Breast epithelium (tissue), 4 donors: ENCODE measurements at regions of chr13 and their contacts with region 1.

Region 1: GRCh38 chr13:90483906-90484305 is 863.6 kb upstream of the MIR17HG start:
- DNase-seq: no peak
- H3K4me3 ChIP-seq: no peak overlapping the region
- H3K27ac ChIP-seq: no peak overlapping the region
- H3K4me1 ChIP-seq: no peaks in the 10 kb centered on the region
- H3K27me3 ChIP-seq: no peaks in the 10 kb centered on the region
- CTCF ChIP-seq: no peak
- POLR2A ChIP-seq: no peak

Region 2: GRCh38 chr13:90039516-90039915 is 444.4 kb before region 1 on chr13:
- intact Hi-C with region 1: no loop called
- DNase-seq: no peak
- H3K4me3 ChIP-seq: no peak overlapping the region
- H3K27ac ChIP-seq: no peak overlapping the region
- H3K4me1 ChIP-seq: no peaks in the 10 kb centered on the region
- H3K27me3 ChIP-seq: no peaks in the 10 kb centered on the region
- CTCF ChIP-seq: no peak
- POLR2A ChIP-seq: no peak

Region 3: DNA sequence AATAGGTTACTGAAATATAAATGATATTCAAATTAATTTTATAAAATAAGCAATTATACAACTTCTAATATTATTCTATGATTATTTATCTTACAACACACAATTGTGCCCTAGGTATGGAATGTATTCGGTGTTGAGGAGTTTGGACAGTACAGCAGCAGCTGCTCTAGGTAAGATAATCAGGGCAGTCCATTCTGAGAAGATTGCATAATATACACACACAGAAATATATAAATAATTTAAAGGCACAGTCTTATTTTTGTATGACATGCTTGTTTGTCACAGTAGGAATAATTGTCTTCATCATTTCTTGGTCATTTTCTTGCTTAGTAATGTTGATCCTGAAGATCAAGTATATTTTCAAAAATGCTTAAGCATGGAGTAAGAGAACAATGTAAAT is 14.2 kb after region 1 on chr13:
- intact Hi-C with region 1: no loop called
- DNase-seq: no peak
- H3K4me3 ChIP-seq: no peak overlapping the region
- H3K27ac ChIP-seq: no peak overlapping the region
- H3K4me1 ChIP-seq: no peaks in the 10 kb centered on the region
- H3K27me3 ChIP-seq: no peaks in the 10 kb centered on the region
- CTCF ChIP-seq: no peak
- POLR2A ChIP-seq: no peak

Region 4: DNA sequence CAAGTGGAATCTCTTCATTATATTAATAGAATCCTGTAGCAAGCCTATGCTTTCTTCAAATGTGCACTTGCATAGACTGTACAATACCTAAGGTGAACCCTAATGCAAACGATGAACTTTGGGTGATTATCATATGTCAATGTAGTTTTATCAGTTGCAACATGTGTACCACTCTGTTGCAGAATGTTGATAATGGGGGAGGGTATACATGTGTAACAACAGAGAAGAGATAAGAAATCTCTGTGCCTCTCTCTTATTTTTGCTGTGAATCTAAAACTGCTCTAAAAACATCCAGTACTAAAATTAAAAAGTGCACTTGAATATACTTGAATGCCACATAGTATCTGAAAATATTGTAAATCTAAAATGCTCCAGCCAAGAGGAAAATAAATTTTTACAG is 42.8 kb after region 1 on chr13:
- intact Hi-C with region 1: loop called (anchors 2 kb)
- DNase-seq: no peak
- H3K4me3 ChIP-seq: no peak overlapping the region
- H3K27ac ChIP-seq: no peak overlapping the region
- H3K4me1 ChIP-seq: no peaks in the 10 kb centered on the region
- H3K27me3 ChIP-seq: no peaks in the 10 kb centered on the region
- CTCF ChIP-seq: no peak
- POLR2A ChIP-seq: no peak

Region 5: GRCh38 chr13:90633849-90634248 is 149.9 kb after region 1 on chr13:
- intact Hi-C with region 1: no loop called
- DNase-seq: no peak
- H3K4me3 ChIP-seq: no peak overlapping the region
- H3K27ac ChIP-seq: no peak overlapping the region
- H3K4me1 ChIP-seq: no peaks in the 10 kb centered on the region
- H3K27me3 ChIP-seq: no peaks in the 10 kb centered on the region
- CTCF ChIP-seq: no peak
- POLR2A ChIP-seq: no peak